ENCODE measurements at regions of chr12 and their contacts with region 1.

Region 1: GRCh38 chr12:69097619-69098368 is 141.6 kb upstream of the CPSF6 start:
- DNase-seq: no peak
- H3K4me3 ChIP-seq: no peak overlapping the region
- H3K27ac ChIP-seq: peak overlapping the region in 1 of 2 donors; percentile 46
- H3K4me1 ChIP-seq: peaks cover 23% of the 10 kb centered on the region
- H3K27me3 ChIP-seq: no peaks in the 10 kb centered on the region
- CTCF ChIP-seq: no peak
- EP300 ChIP-seq: no peak
- POLR2A ChIP-seq: no peak

Region 2: DNA sequence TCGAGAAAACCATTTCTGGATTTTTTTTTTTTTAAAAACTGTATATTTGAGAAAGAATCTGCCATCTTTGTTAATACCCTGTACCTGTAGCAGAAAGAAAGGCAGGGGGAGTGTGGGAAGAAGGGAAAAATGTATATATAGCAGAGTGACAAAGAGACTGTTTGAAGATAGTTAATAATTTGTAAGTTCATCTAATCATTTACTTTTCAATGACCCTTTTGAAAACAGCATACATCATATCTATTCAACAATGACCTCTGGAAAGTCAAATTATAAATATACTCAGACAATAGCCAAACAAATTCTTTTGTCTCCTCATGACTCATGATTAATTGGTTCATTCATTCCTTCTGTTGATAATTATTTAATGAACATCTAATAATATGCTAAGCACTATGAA is 153.9 kb before region 1 on chr12:
- intact Hi-C with region 1: loop called in 1 of 4 experiments (anchors 10 kb)
- DNase-seq: no peak
- H3K4me3 ChIP-seq: no peak overlapping the region
- H3K27ac ChIP-seq: no peak overlapping the region
- H3K4me1 ChIP-seq: peaks cover 6% of the 10 kb centered on the region
- H3K27me3 ChIP-seq: no peaks in the 10 kb centered on the region
- CTCF ChIP-seq: no peak
- EP300 ChIP-seq: no peak
- POLR2A ChIP-seq: no peak

Region 3: GRCh38 chr12:69083689-69084088 is 14.1 kb before region 1 on chr12:
- intact Hi-C with region 1: no loop called
- DNase-seq: no peak
- H3K4me3 ChIP-seq: no peak overlapping the region
- H3K27ac ChIP-seq: no peak overlapping the region
- H3K4me1 ChIP-seq: no peaks in the 10 kb centered on the region
- H3K27me3 ChIP-seq: no peaks in the 10 kb centered on the region
- CTCF ChIP-seq: no peak
- EP300 ChIP-seq: no peak
- POLR2A ChIP-seq: no peak